Vagina (tissue), 2 donors: ENCODE measurements at regions of chr6 and their contacts with region 1.

Region 1: DNA sequence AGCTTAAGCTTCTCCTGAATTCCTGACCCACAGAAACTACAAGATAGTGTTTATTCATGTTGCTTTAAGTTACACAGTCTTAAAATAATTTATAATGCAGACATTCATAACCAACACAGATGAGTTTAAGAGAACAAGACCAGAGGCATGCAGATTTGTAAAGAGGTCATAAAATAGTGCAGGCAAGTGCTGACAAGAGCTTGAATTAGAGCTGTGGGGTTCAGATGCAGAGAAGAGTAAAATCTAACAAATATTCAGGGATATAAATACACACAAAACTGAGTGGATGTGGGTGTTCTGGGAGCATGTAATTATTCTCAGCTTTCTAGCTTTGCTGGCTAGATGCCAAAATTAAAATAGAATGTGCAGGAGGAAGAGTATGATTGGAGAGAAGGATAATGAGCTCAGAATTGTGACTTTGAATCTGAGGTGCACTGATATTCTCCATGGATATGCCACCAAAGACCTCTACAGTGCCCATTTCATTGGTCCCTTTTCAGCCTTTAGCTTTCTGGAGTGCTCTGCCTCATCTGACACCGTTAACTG is 291.9 kb upstream of the SGK1 start:
- DNase-seq: no peak
- H3K4me3 ChIP-seq: no peak overlapping the region
- H3K27ac ChIP-seq: no peak overlapping the region
- H3K4me1 ChIP-seq: peaks cover 12% of the 10 kb centered on the region
- H3K27me3 ChIP-seq: no peaks in the 10 kb centered on the region
- CTCF ChIP-seq: no peak
- POLR2A ChIP-seq: no peak

Region 2: DNA sequence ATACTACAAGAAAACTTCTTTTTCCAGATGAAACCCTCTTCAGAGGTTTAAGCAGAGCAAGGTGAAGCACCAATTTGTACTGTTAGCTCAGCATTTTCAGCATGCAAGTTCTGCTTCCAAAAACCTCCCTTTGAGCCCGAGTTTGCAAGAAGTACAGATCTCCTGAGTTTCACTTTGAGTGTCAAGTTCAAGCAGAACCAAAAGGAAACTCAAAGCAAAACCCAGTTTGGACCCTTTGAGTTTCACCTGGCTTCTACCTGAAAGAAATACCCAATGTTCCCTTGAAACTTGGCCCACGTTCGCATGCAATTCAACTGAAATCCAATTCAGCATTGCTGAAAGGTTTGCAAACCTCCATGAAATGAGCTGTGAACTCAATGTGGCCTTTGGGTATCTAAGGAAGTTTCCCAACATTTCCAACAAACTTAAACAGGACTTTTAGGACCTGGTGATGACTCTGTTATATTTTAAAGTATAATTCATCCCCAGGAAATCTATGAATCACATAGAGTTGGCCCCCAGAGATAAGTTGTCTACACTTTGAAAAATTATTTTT is 507.7 kb after region 1 on chr6:
- intact Hi-C with region 1: no loop called
- DNase-seq: no peak
- H3K4me3 ChIP-seq: no peak overlapping the region
- H3K27ac ChIP-seq: no peak overlapping the region
- H3K4me1 ChIP-seq: no peaks in the 10 kb centered on the region
- H3K27me3 ChIP-seq: no peaks in the 10 kb centered on the region
- CTCF ChIP-seq: no peak
- POLR2A ChIP-seq: no peak

Region 3: DNA sequence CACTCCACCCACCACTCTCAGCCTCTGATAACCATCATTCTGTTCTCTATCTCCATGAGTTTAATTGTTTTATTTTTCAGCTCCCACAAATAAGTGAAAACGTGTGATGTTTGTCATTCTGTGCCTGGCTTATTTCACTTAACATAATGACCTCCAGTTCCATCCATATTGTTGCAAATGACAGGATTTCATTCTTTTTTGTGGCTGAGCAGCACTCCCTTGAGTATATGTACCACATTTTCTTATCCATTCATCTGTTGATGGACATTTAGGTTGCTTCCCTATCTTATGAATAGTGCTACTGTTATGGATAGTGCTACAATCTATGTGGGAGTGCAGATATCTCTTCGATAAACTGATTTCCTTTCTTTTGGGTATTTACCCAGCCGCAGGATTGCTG is 1138.4 kb after region 1 on chr6:
- intact Hi-C with region 1: loop called (anchors 5 kb)
- DNase-seq: no peak
- H3K4me3 ChIP-seq: no peak overlapping the region
- H3K27ac ChIP-seq: no peak overlapping the region
- H3K4me1 ChIP-seq: no peaks in the 10 kb centered on the region
- H3K27me3 ChIP-seq: no peaks in the 10 kb centered on the region
- CTCF ChIP-seq: no peak
- POLR2A ChIP-seq: no peak